CD8-positive, alpha-beta T cell (primary cell): ENCODE measurements at regions of chr9 and their contacts with region 1.

Region 1: DNA sequence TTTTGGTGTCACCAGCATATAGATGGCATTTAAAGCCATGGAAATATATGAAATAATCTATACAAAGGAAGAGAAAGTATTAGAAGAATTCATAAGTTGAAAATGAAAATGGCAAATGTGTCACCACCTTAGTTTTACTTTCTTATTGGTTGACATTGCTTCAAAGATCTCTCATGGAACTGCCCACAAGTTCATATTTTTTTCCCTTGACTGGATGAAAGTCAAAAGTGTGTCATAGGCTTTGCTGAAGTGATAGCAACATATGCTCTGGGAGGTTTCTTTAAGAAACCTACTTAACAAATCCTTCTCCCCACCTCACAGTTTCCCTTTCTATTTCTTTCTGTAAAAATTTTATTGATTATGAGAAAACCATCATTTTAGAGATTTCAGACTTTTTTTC is 127.2 kb downstream of the VPS13A start:
- DNase-seq: no peak
- ATAC-seq: no peak
- H3K4me3 ChIP-seq: no peak overlapping the region
- H3K4me3 Mint-ChIP-seq: no peak overlapping the region
- H3K27ac ChIP-seq: no peak overlapping the region
- H3K27ac Mint-ChIP-seq: no peak overlapping the region
- H3K4me1 ChIP-seq: no peaks in the 10 kb centered on the region
- H3K4me1 Mint-ChIP-seq: no peaks in the 10 kb centered on the region
- H3K27me3 ChIP-seq: no peaks in the 10 kb centered on the region
- H3K27me3 Mint-ChIP-seq: no peaks in the 10 kb centered on the region
- CTCF ChIP-seq: no peak

Region 2: GRCh38 chr9:77251050-77251449 is 53.5 kb before region 1 on chr9:
- CTCF ChIA-PET with region 1: no interaction called
- POLR2A ChIA-PET with region 1: no interaction called
- intact Hi-C with region 1: loop called in 1 of 2 experiments (anchors 10 kb)
- DNase-seq: no peak
- ATAC-seq: no peak
- H3K4me3 ChIP-seq: no peak overlapping the region
- H3K4me3 Mint-ChIP-seq: no peak overlapping the region
- H3K27ac ChIP-seq: no peak overlapping the region
- H3K27ac Mint-ChIP-seq: no peak overlapping the region
- H3K4me1 ChIP-seq: no peaks in the 10 kb centered on the region
- H3K4me1 Mint-ChIP-seq: no peaks in the 10 kb centered on the region
- H3K27me3 ChIP-seq: no peaks in the 10 kb centered on the region
- H3K27me3 Mint-ChIP-seq: no peaks in the 10 kb centered on the region
- CTCF ChIP-seq: no peak

Region 3: DNA sequence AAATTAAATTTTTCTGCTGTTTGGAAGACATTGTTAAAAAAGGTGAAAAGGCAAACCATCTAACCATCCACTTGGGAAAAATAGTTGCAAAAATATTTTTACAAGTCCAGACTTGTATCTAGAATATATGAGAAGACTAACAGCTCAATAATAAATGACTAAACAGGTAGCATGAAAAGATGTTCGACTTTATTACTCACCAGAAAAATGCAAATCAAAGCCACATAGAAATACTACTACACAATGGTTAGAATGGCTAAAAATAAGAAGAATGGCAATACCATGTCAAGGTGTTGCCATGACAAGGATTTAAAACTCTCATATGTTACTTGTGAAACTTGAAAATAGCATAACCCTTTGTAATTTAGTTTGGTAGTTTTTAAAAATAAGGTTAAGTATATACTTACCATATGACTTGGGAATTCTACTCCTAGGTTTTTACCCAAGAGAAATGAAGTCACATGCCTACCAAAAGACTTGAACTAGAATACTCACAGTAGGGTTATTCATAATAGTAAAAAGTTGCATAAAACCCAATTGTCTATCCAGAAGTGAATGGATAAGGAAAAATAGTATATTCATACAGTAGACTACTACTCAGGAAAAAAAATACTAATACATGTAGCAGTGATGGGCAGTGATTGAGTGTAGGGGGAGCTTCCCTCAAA is 33.4 kb before region 1 on chr9:
- CTCF ChIA-PET with region 1: no interaction called
- POLR2A ChIA-PET with region 1: no interaction called
- intact Hi-C with region 1: no loop called
- DNase-seq: no peak
- ATAC-seq: no peak
- H3K4me3 ChIP-seq: no peak overlapping the region
- H3K4me3 Mint-ChIP-seq: no peak overlapping the region
- H3K27ac ChIP-seq: no peak overlapping the region
- H3K27ac Mint-ChIP-seq: no peak overlapping the region
- H3K4me1 ChIP-seq: no peaks in the 10 kb centered on the region
- H3K4me1 Mint-ChIP-seq: no peaks in the 10 kb centered on the region
- H3K27me3 ChIP-seq: no peaks in the 10 kb centered on the region
- H3K27me3 Mint-ChIP-seq: no peaks in the 10 kb centered on the region
- CTCF ChIP-seq: no peak